ENCODE measurements at regions of chr1 and their contacts with region 1.

Region 1: GRCh38 chr1:8910914-8911313 is 32.4 kb upstream of the ENO1 start:
- DNase-seq: no peak
- ATAC-seq: no peak
- H3K4me3 ChIP-seq: no peak overlapping the region
- H3K27ac ChIP-seq: no peak overlapping the region
- H3K4me1 ChIP-seq: no peaks in the 10 kb centered on the region
- H3K27me3 ChIP-seq: no peaks in the 10 kb centered on the region
- CTCF ChIP-seq: no peak
- POLR2A ChIP-seq: no peak

Region 2: GRCh38 chr1:8987881-8988617 is 77.1 kb after region 1 on chr1:
- in situ Hi-C with region 1: loop called in 3 of 4 experiments (anchors 5 to 10 kb)
- intact Hi-C with region 1: no loop called
- DNase-seq: peak; percentile 10 to 37
- ATAC-seq: peak in 1 of 2 donors; percentile 55
- H3K4me3 ChIP-seq: no peak overlapping the region
- H3K27ac ChIP-seq: no peak overlapping the region
- H3K4me1 ChIP-seq: peaks cover 3 to 5% of the 10 kb centered on the region in 2 donors
- H3K27me3 ChIP-seq: no peaks in the 10 kb centered on the region
- CTCF ChIP-seq: peak; percentile 80 to 92 (median 89)
- POLR2A ChIP-seq: no peak

Region 3: DNA sequence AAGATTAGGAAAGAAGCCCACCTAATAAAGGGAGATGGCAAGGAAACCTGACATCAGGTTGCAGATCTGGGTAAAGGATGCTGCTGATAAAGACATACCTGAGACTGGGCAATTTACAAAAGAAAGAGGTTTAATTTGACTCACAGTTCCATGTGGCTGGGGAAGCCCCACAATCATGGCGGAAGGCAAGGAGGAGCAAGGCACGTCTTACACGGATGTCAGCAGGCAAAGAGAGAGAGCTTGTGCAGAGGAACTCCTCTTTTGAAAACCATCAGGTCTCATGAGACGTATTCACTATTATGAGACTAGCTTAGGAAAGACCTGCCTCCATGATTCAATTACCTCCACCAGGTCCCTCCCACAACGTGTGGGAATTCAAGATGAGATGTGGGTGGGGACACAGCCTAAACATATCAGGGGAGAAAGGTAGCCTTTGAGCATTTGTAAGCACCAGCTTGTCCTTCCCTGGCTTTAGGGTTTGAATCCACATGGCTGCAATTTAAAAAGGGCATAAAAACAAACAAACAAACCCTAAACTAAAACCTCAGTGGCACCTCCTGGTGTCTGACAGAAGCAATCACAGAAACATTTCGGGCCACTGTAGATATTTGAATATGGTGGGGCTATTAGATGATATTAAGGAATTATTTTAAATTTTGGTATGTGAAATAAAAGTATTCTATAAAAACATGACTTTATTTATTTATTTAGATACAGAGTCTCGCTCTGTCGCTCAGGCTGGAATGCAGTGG is 82.2 kb after region 1 on chr1:
- in situ Hi-C with region 1: loop called in 3 of 4 experiments (anchors 5 to 10 kb)
- intact Hi-C with region 1: no loop called
- DNase-seq: no peak
- ATAC-seq: no peak
- H3K4me3 ChIP-seq: no peak overlapping the region
- H3K27ac ChIP-seq: no peak overlapping the region
- H3K4me1 ChIP-seq: no peaks in the 10 kb centered on the region
- H3K27me3 ChIP-seq: no peaks in the 10 kb centered on the region
- CTCF ChIP-seq: no peak
- POLR2A ChIP-seq: no peak

Region 4: DNA sequence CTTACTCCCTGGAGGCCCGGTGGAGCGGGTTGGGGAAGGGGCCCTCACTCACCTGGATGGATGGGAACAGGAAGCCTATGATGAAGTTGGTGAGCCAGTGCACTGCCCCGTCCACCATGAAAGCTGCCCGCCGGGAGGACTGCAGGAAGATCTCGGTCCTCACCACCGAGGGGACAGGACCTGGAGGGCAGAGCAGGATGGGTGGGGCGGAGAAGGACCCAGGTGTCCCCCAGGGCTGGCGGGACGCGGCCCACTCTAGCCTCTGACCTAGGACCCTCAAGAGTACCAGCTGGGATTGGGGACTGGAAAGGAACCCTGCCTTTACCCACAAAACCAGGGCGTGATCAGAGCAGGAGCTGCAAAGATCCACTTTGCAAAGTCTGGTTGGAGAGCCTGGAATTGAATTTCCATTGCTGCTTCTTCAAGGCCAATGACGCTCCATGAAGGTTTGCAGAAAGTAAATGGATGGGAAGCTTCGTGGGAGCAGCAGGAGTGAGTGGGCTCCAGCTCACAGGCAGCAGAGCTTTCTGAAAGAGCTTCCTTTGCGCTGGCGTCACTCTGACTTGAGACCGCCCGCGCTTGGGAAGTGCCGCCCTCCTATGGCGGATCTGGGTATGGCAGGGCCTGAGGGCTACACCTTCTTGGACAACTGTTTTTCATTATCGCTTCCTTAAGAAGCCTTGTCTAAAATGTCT is 93.9 kb after region 1 on chr1:
- in situ Hi-C with region 1: no loop called
- intact Hi-C with region 1: loop called (anchors 5 kb)
- DNase-seq: peak; percentile 33 to 59
- ATAC-seq: peak; percentile 78 to 79
- H3K4me3 ChIP-seq: no peak overlapping the region
- H3K27ac ChIP-seq: no peak overlapping the region
- H3K4me1 ChIP-seq: no peaks in the 10 kb centered on the region
- H3K27me3 ChIP-seq: no peaks in the 10 kb centered on the region
- CTCF ChIP-seq: peak; percentile 71 to 90 (median 80)
- POLR2A ChIP-seq: no peak